ENCODE measurements at regions of chr20 and their contacts with region 1.

Region 1: GRCh38 chr20:21251278-21251677 is 51.9 kb upstream of the XRN2 start:
- DNase-seq: no peak
- H3K4me3 ChIP-seq: no peak overlapping the region
- H3K27ac ChIP-seq: no peak overlapping the region
- H3K4me1 ChIP-seq: no peaks in the 10 kb centered on the region
- H3K27me3 ChIP-seq: peaks cover 6% of the 10 kb centered on the region; the same call in 1 of the 2 replicates
- CTCF ChIP-seq: no peak

Region 2: DNA sequence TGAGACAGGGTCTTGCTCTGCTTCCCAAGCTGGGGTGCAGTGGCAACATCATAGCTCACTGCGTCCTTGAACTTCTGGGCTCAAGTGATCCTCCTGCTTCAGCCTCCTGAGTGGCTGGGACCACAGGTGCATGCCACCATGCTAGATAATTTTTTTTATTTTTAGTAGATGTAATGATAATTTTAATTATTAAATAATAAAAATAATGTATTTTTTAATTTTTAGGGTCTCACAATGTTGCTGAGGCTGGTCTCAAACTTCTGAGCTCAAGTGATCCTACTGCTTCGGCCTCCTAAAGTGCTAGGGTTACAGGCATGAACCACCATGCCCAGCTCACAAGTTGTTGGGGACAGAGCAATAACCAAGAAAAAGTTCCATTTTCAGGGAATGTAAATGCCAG is 400.9 kb before region 1 on chr20:
- CTCF ChIA-PET with region 1: interaction called, 16 read pairs
- POLR2A ChIA-PET with region 1: interaction called, 6 read pairs
- intact Hi-C with region 1: no loop called
- DNase-seq: no peak
- H3K4me3 ChIP-seq: no peak overlapping the region
- H3K27ac ChIP-seq: no peak overlapping the region
- H3K4me1 ChIP-seq: no peaks in the 10 kb centered on the region
- H3K27me3 ChIP-seq: peaks cover 11% of the 10 kb centered on the region
- CTCF ChIP-seq: no peak

Region 3: DNA sequence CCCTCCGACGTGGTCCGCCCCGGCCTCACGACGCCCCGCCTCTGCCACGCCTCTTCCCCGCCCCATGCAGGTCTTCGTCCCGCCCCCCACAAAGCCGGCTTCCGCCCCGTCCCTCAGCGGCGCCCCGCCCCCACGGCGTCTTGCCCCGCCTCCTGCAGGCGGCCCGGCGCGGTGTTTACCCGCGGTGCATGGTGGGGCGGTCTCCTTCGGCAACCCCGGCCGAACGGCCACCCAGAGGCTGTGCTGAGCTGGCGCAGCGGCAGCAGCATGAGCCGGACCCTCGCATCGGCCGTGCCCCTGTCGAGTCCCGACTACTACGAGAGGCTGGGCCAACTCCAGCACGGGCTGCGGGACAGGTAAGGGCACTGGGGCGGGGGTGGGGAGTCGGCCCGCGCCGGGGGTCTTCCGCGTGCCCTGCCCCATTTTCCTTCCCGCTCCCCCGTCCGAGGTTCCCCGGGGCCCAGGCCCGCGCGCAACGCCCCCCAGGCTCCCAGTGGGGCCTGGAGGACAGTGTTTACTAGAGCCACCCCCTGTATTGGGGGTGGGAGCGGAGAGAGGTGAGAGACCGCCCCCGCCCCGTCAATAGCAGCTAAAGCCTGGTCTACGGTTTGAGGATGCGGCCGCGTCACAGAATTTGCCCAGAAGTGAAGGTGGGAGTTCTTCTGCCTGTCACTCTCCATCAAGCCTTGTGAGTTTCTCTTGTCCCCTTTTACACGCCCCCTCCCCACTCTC is 125.3 kb before region 1 on chr20 and contains the start of gene KIZ:
- CTCF ChIA-PET with region 1: interaction called, 11 read pairs
- POLR2A ChIA-PET with region 1: no interaction called
- intact Hi-C with region 1: no loop called
- DNase-seq: peak; percentile 78 to 99
- H3K4me3 ChIP-seq: peak within 1 kb of the TSS; percentile 83
- H3K27ac ChIP-seq: no peak within 1 kb of the TSS
- H3K4me1 ChIP-seq: peaks cover 11% of the 10 kb centered on the region
- H3K27me3 ChIP-seq: no peaks in the 10 kb centered on the region
- CTCF ChIP-seq: peak; percentile 33; the same call in 1 of the 2 replicates
- total RNA-seq, gene KIZ: 17.2 and 21.5 TPM in 2 replicates

Region 4: GRCh38 chr20:21182832-21183563 is 68.3 kb before region 1 on chr20:
- CTCF ChIA-PET with region 1: no interaction called
- POLR2A ChIA-PET with region 1: no interaction called
- intact Hi-C with region 1: no loop called
- DNase-seq: peak in 1 of 2 experiments; percentile 88
- H3K4me3 ChIP-seq: no peak overlapping the region
- H3K27ac ChIP-seq: peak overlapping the region; percentile 59
- H3K4me1 ChIP-seq: peaks cover 35% of the 10 kb centered on the region
- H3K27me3 ChIP-seq: no peaks in the 10 kb centered on the region
- CTCF ChIP-seq: no peak